Posterior vena cava (tissue), 2 donors: ENCODE measurements at regions of chr3 and their contacts with region 1.

Region 1: DNA sequence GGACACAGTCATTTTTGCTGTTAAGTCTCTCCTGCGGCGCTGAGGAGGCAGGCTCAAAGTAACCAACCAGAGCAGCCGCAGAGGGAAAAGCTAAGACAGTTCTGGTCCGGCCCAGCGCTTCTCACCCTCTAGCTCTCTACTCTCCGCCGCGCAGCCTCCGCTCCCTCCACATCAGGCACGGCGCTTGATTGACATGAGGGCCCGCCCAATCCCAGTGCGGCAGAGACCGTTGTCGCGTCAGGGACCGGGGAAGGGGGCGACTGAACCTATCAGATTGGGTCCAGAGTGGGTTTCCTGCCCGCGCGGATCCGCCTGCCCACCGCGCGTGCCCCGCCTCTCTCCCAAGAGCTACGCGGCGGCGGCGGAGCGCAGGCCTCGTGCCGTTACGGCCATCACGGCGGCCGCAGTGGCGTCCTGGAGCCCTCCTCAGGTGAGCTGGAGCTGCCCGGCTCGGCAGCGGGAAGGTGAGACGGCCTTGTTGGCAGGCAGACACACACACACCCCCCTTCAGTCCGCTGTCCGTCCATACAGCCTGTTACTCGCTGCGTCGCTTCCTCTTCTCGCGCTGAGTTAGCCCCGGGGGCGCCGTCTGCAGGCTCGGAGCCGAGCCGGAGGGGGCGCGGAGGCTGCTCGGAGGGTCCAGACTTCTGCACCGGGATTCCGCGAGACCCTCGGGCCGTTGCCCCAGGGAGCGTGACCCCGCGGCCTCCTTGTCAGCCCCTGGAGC is at the start of gene NCK1:
- DNase-seq: peak; percentile 99
- total RNA-seq, gene NCK1: 27.2 to 32.4 TPM

Region 2: GRCh38 chr3:135965506-135966270 is 896.4 kb before region 1 on chr3 and contains the start of gene PPP2R3A:
- intact Hi-C with region 1: loop called in 1 of 2 experiments (anchors 5 kb)
- DNase-seq: peak; percentile 94
- total RNA-seq, gene PPP2R3A: 10.6 to 18.7 TPM

Region 3: GRCh38 chr3:136818769-136819391 is 43.2 kb before region 1 on chr3 and contains the start of gene SLC35G2:
- intact Hi-C with region 1: no loop called
- DNase-seq: peak; percentile 87
- total RNA-seq, gene SLC35G2: 6.9 to 7.3 TPM

Region 4: DNA sequence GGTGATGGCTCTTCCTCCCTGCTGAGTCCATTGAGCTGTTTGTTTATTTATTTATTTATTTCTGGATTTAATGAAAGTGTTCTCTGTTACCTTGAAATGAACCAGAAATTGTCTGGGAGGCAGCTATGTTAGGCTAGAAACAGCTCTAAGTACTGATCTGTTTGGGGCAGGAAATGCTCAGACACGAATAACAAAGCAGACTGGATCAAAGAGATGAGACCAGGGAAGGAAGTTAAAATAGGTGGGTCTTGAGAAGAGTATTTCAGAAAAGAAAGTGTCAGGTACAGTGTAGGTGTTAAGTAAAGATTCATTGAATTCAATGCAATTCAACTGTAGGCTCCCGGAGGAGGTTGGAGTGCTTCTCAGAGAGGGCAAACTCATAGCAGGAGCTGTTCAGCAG is 269.0 kb after region 1 on chr3:
- intact Hi-C with region 1: no loop called
- DNase-seq: no peak